Astrocyte of the cerebellum (primary cell): ENCODE measurements at regions of chr2 and their contacts with region 1.

Region 1: DNA sequence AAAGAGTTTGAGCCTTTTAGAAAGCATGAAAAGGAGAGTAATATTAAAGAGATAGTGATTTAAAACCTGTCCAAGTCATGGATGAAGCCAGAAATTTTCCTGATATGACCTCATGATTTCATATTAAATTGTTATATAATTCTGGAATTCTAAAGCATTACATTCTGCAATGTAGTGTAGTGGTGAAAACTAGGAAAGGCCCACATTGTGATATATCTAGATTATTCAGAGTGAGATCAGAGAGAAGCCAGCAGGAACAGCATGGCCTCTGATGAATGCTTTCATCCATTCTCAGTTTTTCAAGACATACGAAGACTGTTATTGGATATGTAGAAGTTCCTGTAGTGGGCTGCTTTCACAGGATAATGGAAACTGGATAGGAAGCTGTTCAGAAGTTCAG is 98.8 kb downstream of the LCLAT1 start:
- DNase-seq: no peak
- H3K4me3 ChIP-seq: no peak overlapping the region
- CTCF ChIP-seq: no peak

Region 2: GRCh38 chr2:30492185-30492584 is 53.7 kb before region 1 on chr2:
- in situ Hi-C with region 1: loop called (anchors 5 kb)
- DNase-seq: no peak
- H3K4me3 ChIP-seq: no peak overlapping the region
- CTCF ChIP-seq: no peak

Region 3: GRCh38 chr2:30511122-30512083 is 34.5 kb before region 1 on chr2:
- in situ Hi-C with region 1: no loop called
- DNase-seq: no peak
- H3K4me3 ChIP-seq: no peak overlapping the region
- CTCF ChIP-seq: no peak

Region 4: DNA sequence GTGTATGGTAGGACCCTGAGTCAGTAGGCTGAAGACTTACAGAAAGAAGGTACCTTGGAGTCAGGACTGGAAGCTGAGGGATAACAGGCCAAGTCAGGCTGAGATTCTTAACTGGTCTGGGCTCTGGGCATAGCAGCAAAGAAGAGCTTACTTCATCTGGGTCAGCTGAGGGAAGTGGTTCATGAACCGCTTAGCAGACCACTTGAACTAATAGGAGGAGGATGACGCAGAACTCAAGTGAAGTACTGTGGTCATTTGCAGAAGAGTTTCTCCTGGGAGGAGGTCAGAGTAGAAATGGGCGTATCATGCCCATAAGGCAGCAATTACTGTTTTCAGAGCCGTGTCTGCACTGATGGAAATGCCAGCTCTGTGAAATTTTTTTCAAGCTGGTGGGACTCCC is 65.7 kb after region 1 on chr2:
- in situ Hi-C with region 1: no loop called
- DNase-seq: no peak
- H3K4me3 ChIP-seq: no peak overlapping the region
- CTCF ChIP-seq: no peak